Right cardiac atrium (tissue), 5 donors: ENCODE measurements at regions of chr4 and their contacts with region 1.

Region 1: GRCh38 chr4:114659386-114660008 is 60.9 kb downstream of the UGT8 start:
- DNase-seq: peak; percentile 26 to 58 (median 54)
- ATAC-seq: peak; percentile 86 to 88
- H3K4me3 ChIP-seq: no peak overlapping the region
- H3K27ac ChIP-seq: no peak overlapping the region
- H3K4me1 ChIP-seq: no peaks in the 10 kb centered on the region
- H3K27me3 ChIP-seq: no peaks in the 10 kb centered on the region

Region 2: GRCh38 chr4:114386637-114387233 is 272.8 kb before region 1 on chr4:
- intact Hi-C with region 1: loop called (anchors 2 to 5 kb)
- DNase-seq: no peak
- ATAC-seq: no peak
- H3K4me3 ChIP-seq: no peak overlapping the region
- H3K27ac ChIP-seq: no peak overlapping the region
- H3K4me1 ChIP-seq: no peaks in the 10 kb centered on the region
- H3K27me3 ChIP-seq: no peaks in the 10 kb centered on the region

Region 3: DNA sequence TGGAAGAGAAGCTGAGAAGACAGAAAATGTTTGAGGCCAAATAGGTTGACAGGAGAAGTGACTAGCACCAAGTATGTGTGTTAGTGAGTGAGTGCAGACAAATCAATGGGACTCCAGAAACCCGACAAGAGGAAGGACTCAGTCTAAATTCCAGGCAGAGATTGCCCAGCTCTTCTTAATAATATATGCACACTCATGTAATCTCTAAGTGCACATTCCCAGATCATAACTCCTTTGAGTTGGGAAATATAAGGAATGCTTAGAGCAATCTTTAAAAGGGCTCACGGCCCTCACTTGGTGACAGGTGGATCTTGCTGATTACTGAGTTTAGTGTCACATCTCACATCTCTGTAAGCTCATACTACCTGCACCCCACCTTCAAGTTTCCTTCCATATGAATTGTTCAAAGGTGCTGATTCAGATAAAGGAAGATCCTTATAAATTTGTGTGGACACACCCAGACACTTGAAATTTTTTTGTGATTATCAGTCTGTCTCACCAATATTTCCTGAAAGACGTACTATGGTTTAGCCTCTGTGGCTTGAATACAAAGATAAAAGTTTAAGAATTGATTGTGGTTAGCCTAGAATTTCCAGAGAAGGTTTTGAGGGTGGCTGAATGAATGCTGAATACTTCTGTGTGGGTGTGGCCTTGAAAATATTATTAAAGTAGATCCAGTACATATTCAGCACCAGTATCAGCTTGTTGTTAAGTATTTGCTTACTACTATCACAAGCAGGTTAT is 266.0 kb before region 1 on chr4:
- intact Hi-C with region 1: loop called in 3 of 4 experiments (anchors 5 kb)
- DNase-seq: no peak
- ATAC-seq: no peak
- H3K4me3 ChIP-seq: no peak overlapping the region
- H3K27ac ChIP-seq: no peak overlapping the region
- H3K4me1 ChIP-seq: no peaks in the 10 kb centered on the region
- H3K27me3 ChIP-seq: no peaks in the 10 kb centered on the region

Region 4: DNA sequence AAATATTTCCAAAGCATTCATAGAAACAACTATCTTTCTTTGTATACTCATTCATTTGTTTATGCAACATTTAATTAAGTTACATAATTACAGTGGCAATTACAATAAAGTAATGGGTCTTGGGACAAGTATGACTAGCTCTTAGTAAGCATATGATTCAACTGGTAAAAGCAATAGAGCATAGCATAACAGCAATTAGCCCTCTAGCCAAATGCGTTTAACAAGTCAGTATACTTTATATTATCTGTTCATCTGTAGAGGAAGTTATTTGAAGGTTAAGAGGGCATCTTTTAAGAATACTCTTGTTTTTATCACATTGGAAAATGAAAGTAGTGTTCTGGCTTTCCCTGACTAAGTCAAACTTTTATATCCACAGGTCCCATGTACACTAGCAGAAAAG is 259.0 kb before region 1 on chr4:
- intact Hi-C with region 1: loop called in 1 of 4 experiments (anchors 5 kb)
- DNase-seq: no peak
- ATAC-seq: no peak
- H3K4me3 ChIP-seq: no peak overlapping the region
- H3K27ac ChIP-seq: no peak overlapping the region
- H3K4me1 ChIP-seq: no peaks in the 10 kb centered on the region
- H3K27me3 ChIP-seq: no peaks in the 10 kb centered on the region

Region 5: GRCh38 chr4:114435116-114435515 is 224.4 kb before region 1 on chr4:
- intact Hi-C with region 1: no loop called
- DNase-seq: no peak
- ATAC-seq: no peak
- H3K4me3 ChIP-seq: no peak overlapping the region
- H3K27ac ChIP-seq: no peak overlapping the region
- H3K4me1 ChIP-seq: no peaks in the 10 kb centered on the region
- H3K27me3 ChIP-seq: no peaks in the 10 kb centered on the region

Region 6: GRCh38 chr4:114598191-114599121 is 61.0 kb before region 1 on chr4 and contains the start of gene UGT8:
- intact Hi-C with region 1: no loop called
- DNase-seq: peak; percentile 38 to 70 (median 55)
- ATAC-seq: peak; percentile 68 to 73
- H3K4me3 ChIP-seq: peak within 1 kb of the TSS; percentile 43
- H3K27ac ChIP-seq: no peak within 1 kb of the TSS
- H3K4me1 ChIP-seq: no peaks in the 10 kb centered on the region
- H3K27me3 ChIP-seq: no peaks in the 10 kb centered on the region
- total RNA-seq, gene UGT8: 0.29 to 0.33 (median 0.32) TPM in 3 of 4 donors, not detected in the other

Region 7: GRCh38 chr4:114674080-114674479 is 14.6 kb after region 1 on chr4:
- intact Hi-C with region 1: no loop called
- DNase-seq: no peak
- ATAC-seq: no peak
- H3K4me3 ChIP-seq: no peak overlapping the region
- H3K27ac ChIP-seq: no peak overlapping the region
- H3K4me1 ChIP-seq: no peaks in the 10 kb centered on the region
- H3K27me3 ChIP-seq: no peaks in the 10 kb centered on the region

Region 8: GRCh38 chr4:114986133-114986532 is 326.6 kb after region 1 on chr4:
- intact Hi-C with region 1: no loop called
- DNase-seq: no peak
- ATAC-seq: no peak
- H3K4me3 ChIP-seq: no peak overlapping the region
- H3K27ac ChIP-seq: no peak overlapping the region
- H3K4me1 ChIP-seq: no peaks in the 10 kb centered on the region
- H3K27me3 ChIP-seq: no peaks in the 10 kb centered on the region